ENCODE measurements at regions of chr6 and their contacts with region 1.

Region 1: GRCh38 chr6:2931970-2932748 is 29.1 kb upstream of the SERPINB9 start:
- DNase-seq: peak; percentile 83 to 87
- H3K4me3 ChIP-seq: no peak overlapping the region
- H3K27ac ChIP-seq: no peak overlapping the region
- H3K4me1 ChIP-seq: peaks cover 0 to 7% (median 4%) of the 10 kb centered on the region in 4 donors
- H3K27me3 ChIP-seq: no peaks in the 10 kb centered on the region
- CTCF ChIP-seq: peak; percentile 93 to 99

Region 2: DNA sequence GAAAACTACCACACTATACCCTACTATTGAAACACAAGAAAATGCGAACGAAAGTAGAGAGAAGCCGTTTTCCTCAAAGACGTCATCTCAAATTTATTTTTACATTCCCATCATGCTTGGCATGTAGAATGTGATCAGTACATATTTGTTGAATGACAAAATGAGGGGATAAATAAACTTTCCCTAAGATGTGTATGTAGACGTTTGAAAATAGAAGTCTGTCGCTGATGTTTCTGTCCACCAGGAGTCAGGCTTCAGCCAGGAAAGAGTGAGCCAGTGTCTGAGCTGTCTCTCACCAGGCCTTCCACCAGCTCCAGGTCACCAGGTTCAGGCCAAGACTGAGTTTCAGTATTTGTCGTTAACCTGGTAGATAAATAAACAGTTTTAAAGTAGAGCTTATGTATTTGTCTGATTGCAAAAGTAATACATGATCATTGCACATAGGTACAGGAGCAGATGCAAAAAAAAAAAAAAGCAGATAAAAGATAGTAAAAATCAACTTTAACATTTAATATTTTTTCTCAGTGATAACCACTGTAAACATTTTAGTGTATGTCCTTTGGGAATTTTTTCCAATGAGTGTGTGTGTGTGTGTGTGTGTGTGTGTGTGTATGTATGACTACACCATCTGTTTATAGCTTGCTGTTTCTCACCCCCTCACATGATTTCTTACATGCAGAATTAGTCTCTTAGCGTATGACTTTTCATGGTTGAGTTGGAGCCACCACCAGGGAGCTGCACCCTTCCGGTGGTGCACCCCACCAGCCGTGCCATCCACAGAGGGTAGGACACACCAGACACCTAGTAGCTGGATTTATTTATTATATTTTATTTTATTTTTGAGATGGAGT is 140.8 kb before region 1 on chr6:
- intact Hi-C with region 1: loop called (anchors 5 kb)
- DNase-seq: peak; percentile 76 to 84
- H3K4me3 ChIP-seq: peak overlapping the region; percentile 31 to 33
- H3K27ac ChIP-seq: peak overlapping the region; percentile 77 to 82
- H3K4me1 ChIP-seq: peaks cover 0 to 50% (median 24%) of the 10 kb centered on the region in 4 donors
- H3K27me3 ChIP-seq: no peaks in the 10 kb centered on the region
- CTCF ChIP-seq: peak; percentile 76 to 89